ENCODE measurements at regions of chr13 and their contacts with region 1.

Region 1: DNA sequence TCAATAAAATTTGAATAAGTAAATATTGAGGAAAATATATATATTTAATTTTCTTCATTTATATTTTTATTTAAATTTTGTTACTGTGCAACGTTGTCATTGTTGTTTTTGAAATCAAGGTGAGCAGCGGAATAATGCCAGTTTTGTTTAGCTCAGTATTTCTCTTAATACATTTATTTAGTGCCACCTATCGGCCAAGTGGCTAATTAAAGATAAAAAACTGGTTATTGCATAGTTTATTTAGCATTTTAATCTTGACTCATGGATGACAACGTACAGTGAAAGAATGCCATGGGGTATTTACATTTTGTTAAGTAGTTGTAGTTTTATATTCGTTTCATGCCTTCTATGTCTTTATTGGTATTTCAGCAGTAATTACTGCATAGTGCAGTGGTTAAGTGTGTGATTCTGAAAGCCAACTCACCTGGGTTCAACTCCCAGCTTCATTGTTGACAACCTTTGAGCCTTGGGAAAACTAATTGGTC is 265.9 kb downstream of the MYO16 start:
- DNase-seq: peak; percentile 65
- H3K4me3 ChIP-seq: no peak overlapping the region
- H3K27ac ChIP-seq: no peak overlapping the region
- H3K4me1 ChIP-seq: peaks cover 3% of the 10 kb centered on the region
- H3K27me3 ChIP-seq: no peaks in the 10 kb centered on the region
- CTCF ChIP-seq: peak; percentile 48 to 55

Region 2: DNA sequence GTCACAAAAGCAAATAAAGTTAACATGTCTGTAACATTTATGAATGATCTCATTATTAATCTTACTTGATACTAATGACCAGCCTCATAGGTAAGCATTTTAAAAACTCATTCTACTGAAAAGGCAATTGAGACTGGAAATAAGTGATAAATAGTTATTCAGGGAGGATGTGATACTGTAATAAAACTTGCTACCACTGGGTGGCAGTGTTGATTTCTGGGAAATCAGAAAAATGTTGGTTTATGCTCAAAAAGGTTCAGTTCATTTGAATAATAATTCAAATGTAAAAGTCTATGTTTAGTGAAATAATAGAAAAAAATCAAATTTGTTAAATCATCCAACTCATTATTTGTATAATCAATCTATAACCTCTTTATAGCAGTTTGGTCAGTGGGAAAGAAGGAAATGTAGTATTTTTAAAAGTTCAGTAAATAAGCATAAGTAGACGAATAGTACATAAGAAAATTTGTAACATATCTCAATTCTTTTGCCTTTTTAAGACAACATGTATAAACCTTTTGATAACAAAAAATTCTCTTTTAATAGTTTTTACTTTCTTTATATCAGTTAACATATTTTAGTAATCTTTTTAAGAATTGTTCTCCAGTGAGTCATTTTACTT is 667.5 kb before region 1 on chr13:
- CTCF ChIA-PET with region 1: no interaction called
- dilution Hi-C with region 1: no loop called
- in situ Hi-C with region 1: no loop called
- intact Hi-C with region 1: loop called (anchors 10 kb)
- DNase-seq: peak; percentile 5
- H3K4me3 ChIP-seq: no peak overlapping the region
- H3K27ac ChIP-seq: no peak overlapping the region
- H3K4me1 ChIP-seq: no peaks in the 10 kb centered on the region
- H3K27me3 ChIP-seq: no peaks in the 10 kb centered on the region
- CTCF ChIP-seq: peak; percentile 69 to 73

Region 3: DNA sequence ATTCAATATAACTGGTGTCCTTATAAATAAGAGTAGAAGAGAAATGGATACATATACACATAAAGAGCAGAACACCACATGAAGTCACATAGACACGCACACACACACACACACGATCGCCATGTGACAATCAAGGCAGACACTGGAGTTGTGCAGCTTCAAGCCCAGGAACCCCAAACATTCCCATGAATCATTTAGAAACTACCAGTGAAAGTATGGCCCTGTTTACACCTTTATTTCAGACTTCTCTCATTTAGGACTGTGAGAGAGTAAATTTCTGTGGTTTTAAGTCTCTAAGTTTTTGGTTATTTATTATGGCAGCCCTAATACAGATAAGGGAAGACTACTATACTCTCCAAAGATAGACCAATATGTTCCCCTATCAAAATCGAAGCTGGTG is 646.1 kb before region 1 on chr13:
- CTCF ChIA-PET with region 1: no interaction called
- dilution Hi-C with region 1: no loop called
- in situ Hi-C with region 1: no loop called
- intact Hi-C with region 1: no loop called
- DNase-seq: no peak
- H3K4me3 ChIP-seq: no peak overlapping the region
- H3K27ac ChIP-seq: no peak overlapping the region
- H3K4me1 ChIP-seq: no peaks in the 10 kb centered on the region
- H3K27me3 ChIP-seq: no peaks in the 10 kb centered on the region
- CTCF ChIP-seq: no peak

Region 4: GRCh38 chr13:108322206-108322824 is 572.9 kb before region 1 on chr13:
- CTCF ChIA-PET with region 1: interaction called, 3 read pairs
- dilution Hi-C with region 1: loop called (anchors 25 kb)
- in situ Hi-C with region 1: loop called (anchors 5 to 25 kb)
- intact Hi-C with region 1: loop called (anchors 1 kb)
- DNase-seq: peak; percentile 26
- H3K4me3 ChIP-seq: no peak overlapping the region
- H3K27ac ChIP-seq: no peak overlapping the region
- H3K4me1 ChIP-seq: no peaks in the 10 kb centered on the region
- H3K27me3 ChIP-seq: no peaks in the 10 kb centered on the region
- CTCF ChIP-seq: peak; percentile 64 to 73

Region 5: DNA sequence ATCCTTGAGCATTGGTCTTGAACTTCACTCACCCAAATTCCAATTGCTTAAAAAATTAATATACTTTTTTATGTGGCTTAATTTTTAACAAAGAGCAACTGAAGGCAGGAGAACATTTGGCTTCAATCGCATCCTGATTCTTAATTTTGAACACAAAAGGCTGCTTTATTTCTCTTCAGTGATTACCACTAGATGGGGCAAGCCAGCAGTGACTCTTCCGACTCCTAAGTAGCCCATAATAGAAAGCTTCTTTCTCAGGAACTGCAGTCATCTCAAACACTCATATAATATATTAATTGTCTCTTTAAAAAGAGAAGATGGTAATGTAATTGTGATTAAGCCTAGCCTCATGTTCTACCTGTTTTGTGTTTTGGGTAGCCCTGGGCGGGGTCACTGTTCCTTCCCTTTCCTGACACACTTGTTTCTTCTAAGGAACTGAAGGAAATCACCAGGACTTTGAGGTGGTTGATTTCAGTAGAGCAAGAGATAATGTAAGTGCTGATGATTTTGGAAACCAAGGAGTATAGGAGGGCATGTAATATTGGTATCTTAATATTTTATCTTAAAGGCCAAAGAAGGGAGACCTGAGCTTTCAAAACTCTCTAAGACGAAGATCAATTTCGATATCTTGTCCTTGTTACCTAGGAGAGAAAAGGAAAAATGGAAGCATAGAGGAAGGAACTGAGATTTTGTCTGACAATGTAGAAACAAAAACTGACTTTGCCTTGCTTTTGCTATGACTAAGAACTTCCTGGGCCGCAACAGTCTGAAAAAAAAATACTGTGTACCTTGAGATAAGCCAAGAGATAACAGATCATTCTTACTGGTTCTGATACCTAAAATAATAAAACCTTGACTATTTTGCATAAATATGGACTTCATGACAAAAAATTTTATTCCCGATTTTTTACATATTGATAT is 552.6 kb before region 1 on chr13:
- CTCF ChIA-PET with region 1: no interaction called
- dilution Hi-C with region 1: loop called (anchors 25 kb)
- in situ Hi-C with region 1: loop called in 1 of 2 experiments (anchors 25 kb)
- intact Hi-C with region 1: no loop called
- DNase-seq: peak; percentile 6
- H3K4me3 ChIP-seq: no peak overlapping the region
- H3K27ac ChIP-seq: no peak overlapping the region
- H3K4me1 ChIP-seq: no peaks in the 10 kb centered on the region
- H3K27me3 ChIP-seq: peaks cover 2% of the 10 kb centered on the region
- CTCF ChIP-seq: peak; percentile 47 to 72

Region 6: GRCh38 chr13:108609353-108609752 is 285.9 kb before region 1 on chr13:
- CTCF ChIA-PET with region 1: no interaction called
- dilution Hi-C with region 1: no loop called
- in situ Hi-C with region 1: loop called (anchors 25 kb)
- intact Hi-C with region 1: loop called (anchors 1 kb)
- DNase-seq: peak; percentile 4
- H3K4me3 ChIP-seq: no peak overlapping the region
- H3K27ac ChIP-seq: no peak overlapping the region
- H3K4me1 ChIP-seq: no peaks in the 10 kb centered on the region
- H3K27me3 ChIP-seq: no peaks in the 10 kb centered on the region
- CTCF ChIP-seq: peak; percentile 40 to 63

Measured in mammary epithelial cell (primary cell).